ENCODE measurements at regions of chr19 and their contacts with region 1.

Region 1: GRCh38 chr19:48415395-48415794 is 21.9 kb downstream of the GRIN2D start:
- DNase-seq: peak; percentile 88

Region 2: DNA sequence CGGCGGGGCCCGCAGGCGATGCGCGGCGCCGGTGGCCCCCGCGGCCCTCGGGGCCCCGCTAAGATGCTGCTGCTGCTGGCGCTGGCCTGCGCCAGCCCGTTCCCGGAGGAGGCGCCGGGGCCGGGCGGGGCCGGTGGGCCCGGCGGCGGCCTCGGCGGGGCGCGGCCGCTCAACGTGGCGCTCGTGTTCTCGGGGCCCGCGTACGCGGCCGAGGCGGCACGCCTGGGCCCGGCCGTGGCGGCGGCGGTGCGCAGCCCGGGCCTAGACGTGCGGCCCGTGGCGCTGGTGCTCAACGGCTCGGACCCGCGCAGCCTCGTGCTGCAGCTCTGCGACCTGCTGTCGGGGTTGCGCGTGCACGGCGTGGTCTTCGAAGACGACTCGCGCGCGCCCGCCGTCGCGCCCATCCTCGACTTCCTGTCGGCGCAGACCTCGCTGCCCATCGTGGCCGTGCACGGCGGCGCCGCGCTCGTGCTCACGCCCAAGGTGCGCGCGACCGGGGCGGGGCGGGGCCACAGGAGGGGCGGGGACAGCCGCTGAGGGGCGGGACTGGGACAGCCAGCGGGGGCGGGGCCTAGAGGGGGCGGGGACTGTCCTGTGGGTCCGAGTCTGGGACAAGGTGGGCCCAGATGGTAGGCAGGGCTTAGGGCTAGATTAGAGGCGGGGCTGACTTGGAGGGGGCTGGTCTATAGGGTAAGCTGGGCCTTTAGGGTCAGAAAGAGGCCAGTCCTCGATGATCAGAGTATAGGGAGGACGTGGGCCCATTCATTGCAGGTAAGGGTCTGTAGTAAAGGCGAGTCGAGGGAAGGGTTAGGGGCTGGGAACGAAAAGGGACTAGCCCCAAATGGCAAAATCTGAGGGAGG is 16.8 kb before region 1 on chr19:
- CTCF ChIA-PET with region 1: no interaction called
- POLR2A ChIA-PET with region 1: interaction called, 13 read pairs
- DNase-seq: peak; percentile 73

Region 3: GRCh38 chr19:48403606-48404005 is 11.8 kb before region 1 on chr19:
- CTCF ChIA-PET with region 1: no interaction called
- POLR2A ChIA-PET with region 1: interaction called, 13 read pairs
- DNase-seq: peak; percentile 65

Region 4: DNA sequence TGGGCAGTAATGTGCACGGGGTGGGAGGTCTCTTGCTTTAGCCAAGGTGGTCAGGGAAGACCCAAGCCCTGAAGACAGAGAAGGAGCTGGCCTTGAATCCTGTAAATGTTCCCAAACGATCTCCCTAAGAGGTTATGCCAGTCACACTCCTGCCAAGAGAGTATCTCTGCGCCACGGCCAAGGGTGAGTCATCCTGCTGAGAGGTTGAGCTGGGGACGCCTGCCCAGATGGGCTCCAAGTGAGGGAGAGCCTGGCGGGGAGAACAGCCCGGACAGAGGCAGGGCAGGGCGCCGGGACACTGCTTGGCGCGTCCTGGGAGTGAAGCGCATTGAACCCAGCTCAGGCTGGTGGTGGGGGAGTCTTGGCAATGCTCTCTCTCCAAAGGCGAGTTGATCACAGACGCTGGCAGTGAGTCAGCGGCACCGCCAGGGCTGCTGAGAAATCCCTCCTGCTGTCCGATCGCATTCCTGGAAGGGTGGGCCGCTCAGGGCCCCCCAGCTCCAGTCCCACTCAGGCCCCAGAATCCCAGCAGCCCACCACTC is 153.0 kb after region 1 on chr19:
- CTCF ChIA-PET with region 1: no interaction called
- POLR2A ChIA-PET with region 1: no interaction called
- DNase-seq: no peak

Measured in HEK293T (cell line).